ENCODE measurements at regions of chr9 and their contacts with region 1.

Region 1: DNA sequence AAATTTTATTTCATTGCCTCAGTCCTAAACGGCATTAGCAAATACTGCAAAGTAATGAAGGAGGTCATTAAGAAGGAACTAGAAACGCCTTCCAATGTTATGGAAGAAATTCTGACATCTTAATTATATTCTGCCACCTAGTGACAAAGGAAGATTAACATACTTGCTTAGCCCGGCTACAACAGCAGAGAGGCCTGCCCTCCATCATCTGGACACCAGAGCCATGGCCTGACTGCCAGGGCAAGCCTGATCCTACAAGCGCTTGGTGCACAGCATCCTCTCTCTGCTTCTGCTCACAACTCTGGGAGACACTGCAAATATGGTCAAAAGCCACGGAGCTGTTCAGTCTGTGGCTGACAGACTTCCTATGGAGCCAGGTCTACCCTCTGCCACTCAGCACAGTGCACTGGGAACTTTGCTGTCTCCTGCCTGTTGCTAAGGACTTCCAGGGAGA is 87.3 kb upstream of the SLC44A1 start:
- DNase-seq: peak; percentile 33 to 81 (median 62)

Region 2: DNA sequence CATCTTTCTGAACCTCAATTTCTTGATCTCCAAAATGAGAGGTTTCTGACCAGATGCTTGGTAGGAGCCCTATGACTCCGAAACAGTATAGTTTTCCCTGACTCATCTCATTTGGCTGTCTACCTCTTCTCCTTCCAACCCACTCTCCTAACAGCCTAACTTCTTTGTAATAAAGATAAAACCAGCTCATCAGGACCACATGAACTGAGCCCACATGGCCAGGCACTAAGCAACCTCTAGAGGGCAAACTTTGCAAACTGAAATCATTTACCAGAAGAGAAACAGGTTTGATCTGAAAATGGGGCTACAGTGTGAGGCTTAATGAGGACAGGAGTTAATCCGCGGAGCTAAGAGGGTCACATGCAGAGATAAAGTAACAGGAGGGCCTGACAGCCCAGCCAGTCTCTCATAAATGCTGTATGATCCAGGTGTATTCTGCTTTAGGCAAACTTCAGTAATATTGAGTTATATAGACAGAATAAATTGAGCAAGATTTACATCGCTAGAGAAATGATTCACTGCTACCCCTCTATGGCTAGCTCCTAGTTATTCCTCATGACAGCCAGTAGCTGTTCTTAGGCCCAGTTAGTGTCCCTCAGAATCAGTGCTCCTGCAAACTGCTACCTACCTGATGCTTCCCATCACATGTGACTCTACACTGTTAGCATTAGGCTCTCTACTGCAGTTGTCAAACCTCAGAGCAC is 293.8 kb before region 1 on chr9:
- intact Hi-C with region 1: loop called (anchors 5 kb)
- DNase-seq: peak; percentile 21 to 85 (median 62)

Region 3: GRCh38 chr9:105103782-105104181 is 53.4 kb before region 1 on chr9:
- intact Hi-C with region 1: no loop called
- DNase-seq: no peak

Region 4: DNA sequence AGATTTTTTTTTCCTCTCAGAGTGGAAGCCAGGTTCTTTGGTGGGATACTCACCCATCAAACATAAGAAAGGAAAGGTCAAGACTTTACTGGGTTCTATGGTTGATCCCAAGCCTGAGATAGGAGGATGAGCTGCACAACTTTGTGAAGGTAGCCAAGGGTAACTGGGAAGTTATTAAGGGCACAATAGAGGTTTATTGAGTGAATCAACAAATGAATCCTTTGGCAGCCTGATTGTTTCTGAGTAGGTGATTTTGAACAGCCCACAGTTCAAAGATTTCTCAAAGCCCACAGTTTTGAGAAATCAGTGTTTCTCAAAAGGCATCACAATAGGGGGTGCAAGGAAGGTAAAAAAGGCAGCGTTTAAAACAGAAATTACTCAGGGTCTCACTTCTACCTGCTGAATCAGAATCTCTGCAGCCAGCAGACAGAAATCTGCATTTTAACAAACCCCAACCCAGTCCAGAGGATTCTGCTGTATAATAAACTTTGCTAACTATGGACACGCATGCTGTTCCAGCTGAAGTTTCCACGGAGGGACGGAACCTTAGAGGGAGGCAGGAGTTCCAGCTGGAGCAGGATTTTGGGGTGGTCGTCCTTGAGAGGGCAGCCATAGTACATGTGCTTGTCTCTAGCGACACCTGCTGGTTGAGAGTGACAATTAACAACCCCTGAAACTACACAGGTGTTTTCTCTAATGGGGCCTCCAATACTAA is 257.9 kb after region 1 on chr9:
- intact Hi-C with region 1: loop called (anchors 5 kb)
- DNase-seq: peak in 38 of 42 donors; percentile 26 to 90 (median 72)